ENCODE measurements at regions of chr1 and their contacts with region 1.

Region 1: GRCh38 chr1:246506674-246507481 is at the start of gene SMYD3:
- DNase-seq: peak; percentile 72 to 73
- H3K4me3 ChIP-seq: peak within 1 kb of the TSS; percentile 51 to 85 (median 82)
- H3K27ac ChIP-seq: peak within 1 kb of the TSS in 2 of 3 donors; percentile 37 to 41
- H3K4me1 ChIP-seq: peaks cover 8% of the 10 kb centered on the region in 2 donors
- H3K27me3 ChIP-seq: no peaks in the 10 kb centered on the region
- CTCF ChIP-seq: peak in 2 of 6 experiments; percentile 14 to 30
- POLR2A ChIP-seq: peak in 1 of 2 donors; percentile 75
- total RNA-seq, gene SMYD3: 33.7 to 105 (median 51.4) TPM

Region 2: GRCh38 chr1:245537992-245538391 is 968.9 kb before region 1 on chr1:
- intact Hi-C with region 1: no loop called
- DNase-seq: no peak
- H3K4me3 ChIP-seq: no peak overlapping the region
- H3K27ac ChIP-seq: no peak overlapping the region
- H3K4me1 ChIP-seq: no peaks in the 10 kb centered on the region
- H3K27me3 ChIP-seq: no peaks in the 10 kb centered on the region
- CTCF ChIP-seq: no peak
- POLR2A ChIP-seq: no peak

Region 3: DNA sequence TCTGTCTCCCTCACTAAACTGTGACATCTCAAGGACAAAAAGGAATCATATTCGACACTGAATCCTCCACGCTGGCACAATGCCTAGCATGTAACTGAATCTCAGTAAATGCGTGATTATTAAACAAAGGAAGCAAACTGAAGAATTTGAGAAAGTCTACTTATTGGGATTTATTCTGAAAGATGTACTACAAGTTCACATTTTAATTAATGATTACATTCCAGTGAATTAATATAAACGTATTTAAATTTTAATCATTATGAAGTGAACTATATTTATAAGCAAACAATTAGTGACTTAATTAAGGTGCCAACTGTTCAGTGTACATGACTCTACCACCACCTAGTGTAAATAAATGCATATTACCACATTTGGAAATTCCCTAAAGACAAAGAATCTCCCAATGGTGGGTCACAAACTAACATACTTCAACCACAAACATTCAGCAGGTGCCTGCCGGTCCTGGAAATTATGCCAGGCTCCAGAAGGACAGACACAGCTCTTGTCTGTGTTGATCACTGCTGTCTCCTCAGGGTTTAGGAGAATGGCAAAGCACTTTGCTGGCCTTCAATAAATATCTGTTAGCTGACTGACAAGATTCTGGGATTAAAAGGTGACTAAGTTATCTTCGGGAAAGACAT is 56.1 kb before region 1 on chr1:
- intact Hi-C with region 1: no loop called
- DNase-seq: no peak
- H3K4me3 ChIP-seq: no peak overlapping the region
- H3K27ac ChIP-seq: no peak overlapping the region
- H3K4me1 ChIP-seq: peaks cover 5 to 30% of the 10 kb centered on the region in 2 donors
- H3K27me3 ChIP-seq: no peaks in the 10 kb centered on the region
- CTCF ChIP-seq: peak in 5 of 6 experiments; percentile 10 to 63 (median 52)
- POLR2A ChIP-seq: no peak

Region 4: GRCh38 chr1:246554201-246554600 is 47.3 kb after region 1 on chr1:
- intact Hi-C with region 1: loop called (anchors 10 kb)
- DNase-seq: no peak
- H3K4me3 ChIP-seq: no peak overlapping the region
- H3K27ac ChIP-seq: no peak overlapping the region
- H3K4me1 ChIP-seq: peaks cover 20 to 21% of the 10 kb centered on the region in 2 donors
- H3K27me3 ChIP-seq: no peaks in the 10 kb centered on the region
- CTCF ChIP-seq: no peak
- POLR2A ChIP-seq: no peak

Region 5: GRCh38 chr1:247054992-247055415 is 548.1 kb after region 1 on chr1:
- intact Hi-C with region 1: no loop called
- DNase-seq: no peak
- H3K4me3 ChIP-seq: no peak overlapping the region
- H3K27ac ChIP-seq: no peak overlapping the region
- H3K4me1 ChIP-seq: no peaks in the 10 kb centered on the region
- H3K27me3 ChIP-seq: no peaks in the 10 kb centered on the region
- CTCF ChIP-seq: no peak
- POLR2A ChIP-seq: no peak

Measured in thyroid gland (tissue), 4 donors.